ENCODE measurements at regions of chrX and their contacts with region 1.

Region 1: DNA sequence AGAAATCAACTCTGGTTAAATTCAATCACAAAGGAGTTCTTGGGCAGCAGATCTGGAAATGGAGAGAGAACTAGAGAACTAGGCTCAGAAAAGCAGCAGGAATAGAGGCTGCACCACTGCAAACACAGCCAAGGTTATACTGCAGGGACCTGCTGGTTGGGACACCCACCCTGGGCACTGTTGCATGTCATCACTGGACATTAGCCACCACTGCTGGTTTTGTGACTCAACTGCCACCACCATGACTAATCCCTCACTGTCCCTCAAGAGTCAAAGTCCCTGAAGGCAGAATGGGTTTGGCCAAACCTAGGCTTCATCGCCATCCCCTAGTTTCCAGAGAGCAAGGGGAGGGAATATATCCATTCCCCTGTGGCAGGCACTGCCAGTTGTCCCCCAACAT is 38.1 kb upstream of the IRAK1 start:
- DNase-seq: no peak
- ATAC-seq: no peak
- H3K4me3 ChIP-seq: no peak overlapping the region
- H3K27ac ChIP-seq: no peak overlapping the region
- H3K4me1 ChIP-seq: peaks cover 6 to 64% (median 48%) of the 10 kb centered on the region in 9 donors
- H3K27me3 ChIP-seq: peaks cover 0 to 62% (median 0%) of the 10 kb centered on the region in 7 donors
- CTCF ChIP-seq: no peak

Region 2: GRCh38 chrX:154074199-154074598 is 16.4 kb after region 1 on chrX:
- intact Hi-C with region 1: loop called in 1 of 10 experiments (anchors 2 kb)
- DNase-seq: no peak
- ATAC-seq: no peak
- H3K4me3 ChIP-seq: no peak overlapping the region
- H3K27ac ChIP-seq: peak overlapping the region in 1 of 10 donors; percentile 21
- H3K4me1 ChIP-seq: peaks cover 0 to 47% (median 26%) of the 10 kb centered on the region in 9 donors
- H3K27me3 ChIP-seq: peaks cover 0 to 53% (median 0%) of the 10 kb centered on the region in 7 donors
- CTCF ChIP-seq: no peak

Region 3: GRCh38 chrX:154378782-154379591 is 321.2 kb after region 1 on chrX and contains the start of gene EMD:
- intact Hi-C with region 1: no loop called
- DNase-seq: peak; percentile 96 to 97
- ATAC-seq: peak; percentile 87 to 95 (median 92)
- H3K4me3 ChIP-seq: peak within 1 kb of the TSS; percentile 53 to 93 (median 82)
- H3K27ac ChIP-seq: peak within 1 kb of the TSS; percentile 92 to 99 (median 98)
- H3K4me1 ChIP-seq: peaks cover 0 to 27% (median 18%) of the 10 kb centered on the region in 9 donors
- H3K27me3 ChIP-seq: no peaks in the 10 kb centered on the region
- CTCF ChIP-seq: peak in 1 of 9 donors; percentile 6
- total RNA-seq, gene EMD: 47.8 to 74.1 (median 59.6) TPM

Measured in heart right ventricle (tissue), 16 donors.